Activated CD8-positive, alpha-beta memory T cell treated with anti-CD3 and anti-CD28 coated beads, Interleukin-2, amount 10 ng/mL, durations not matched to agents 7 days and 5 days (primary cell): ENCODE measurements at regions of chr17 and their contacts with region 1.

Region 1: DNA sequence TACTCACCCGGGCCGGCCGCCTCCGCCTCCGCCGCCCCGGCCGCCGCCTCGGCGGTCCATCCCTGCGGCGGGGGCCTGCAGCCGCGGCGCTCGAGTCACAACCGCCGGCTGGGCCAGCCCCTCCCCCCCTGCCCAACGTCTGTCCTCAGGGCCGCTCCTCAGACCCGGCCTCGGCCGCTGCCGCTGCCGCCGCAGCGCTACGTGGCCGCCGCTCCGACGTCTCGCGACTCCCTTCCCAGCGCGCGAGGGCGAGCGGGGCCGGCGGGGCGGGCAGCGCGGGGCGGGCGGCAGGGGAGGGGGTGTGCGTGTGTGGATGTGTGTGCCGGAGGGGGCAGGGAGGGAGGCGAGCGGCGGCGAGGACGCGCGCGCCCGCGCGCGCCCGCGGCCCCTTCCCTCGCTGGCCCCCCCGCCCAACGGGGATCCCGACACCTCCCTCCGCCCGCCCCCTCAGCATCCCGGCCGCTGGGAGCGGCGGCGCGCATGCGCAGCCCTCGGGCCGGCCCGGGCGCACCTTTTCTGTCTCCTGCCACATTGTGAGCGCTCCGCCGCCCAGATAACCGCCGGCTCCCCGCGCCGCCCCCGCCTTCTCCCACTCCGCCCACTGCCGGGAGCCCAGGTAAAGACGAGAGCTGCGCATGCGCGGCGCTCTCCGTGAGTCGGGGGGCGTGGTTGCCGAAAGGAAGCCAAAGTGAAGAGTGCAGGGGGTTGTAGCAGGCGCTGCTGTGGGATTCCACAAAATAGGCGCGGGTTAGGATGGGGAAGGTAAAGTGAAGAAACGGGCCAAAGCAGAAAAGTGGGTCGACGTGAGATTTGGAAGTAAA is at the start of gene ZNF652:
- DNase-seq: peak; percentile 97
- ATAC-seq: peak; percentile 76
- H3K4me3 Mint-ChIP-seq: peak within 1 kb of the TSS; percentile 98
- H3K27ac Mint-ChIP-seq: peak within 1 kb of the TSS; percentile 97
- H3K4me1 Mint-ChIP-seq: peaks cover 62% of the 10 kb centered on the region
- H3K27me3 Mint-ChIP-seq: no peaks in the 10 kb centered on the region
- total RNA-seq, gene ZNF652: 32.2 to 34.4 TPM

Region 2: DNA sequence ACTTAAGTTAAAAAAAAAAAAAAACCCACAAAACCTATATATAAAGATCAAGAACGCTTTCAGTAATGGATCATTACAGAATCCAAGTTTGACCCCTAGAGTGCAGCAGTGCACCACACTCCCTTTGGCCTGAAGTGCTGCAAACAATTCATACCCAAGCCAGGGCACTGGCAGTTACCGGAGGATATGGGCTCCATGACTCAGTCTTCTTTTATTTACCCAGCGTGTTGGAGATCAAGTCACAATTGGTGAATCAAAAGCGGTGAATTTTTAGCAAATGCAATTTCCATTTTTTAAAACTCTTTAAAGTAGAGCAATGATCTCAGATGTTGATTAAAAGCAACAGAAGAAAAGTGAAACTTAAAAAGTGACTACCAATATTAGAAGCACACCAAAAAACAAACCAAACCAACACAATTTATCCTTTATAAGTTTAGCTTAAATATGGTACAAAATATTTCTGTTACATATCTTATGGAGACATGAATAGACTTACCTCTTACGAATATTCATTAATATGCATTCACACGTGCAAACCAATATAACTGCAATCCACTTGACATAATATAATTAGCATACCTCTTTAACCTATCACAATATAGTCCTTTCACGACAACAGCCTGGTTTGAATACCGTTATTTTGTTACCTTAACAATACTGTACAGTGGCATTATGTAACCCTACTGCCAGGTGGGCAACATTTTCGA is 46.4 kb before region 1 on chr17:
- CTCF ChIA-PET with region 1: interaction called, 150 read pairs
- DNase-seq: peak; percentile 90
- ATAC-seq: peak; percentile 100
- H3K4me3 Mint-ChIP-seq: peak overlapping the region; percentile 65
- H3K27ac Mint-ChIP-seq: peak overlapping the region; percentile 68
- H3K4me1 Mint-ChIP-seq: peaks cover 38% of the 10 kb centered on the region
- H3K27me3 Mint-ChIP-seq: no peaks in the 10 kb centered on the region

Region 3: DNA sequence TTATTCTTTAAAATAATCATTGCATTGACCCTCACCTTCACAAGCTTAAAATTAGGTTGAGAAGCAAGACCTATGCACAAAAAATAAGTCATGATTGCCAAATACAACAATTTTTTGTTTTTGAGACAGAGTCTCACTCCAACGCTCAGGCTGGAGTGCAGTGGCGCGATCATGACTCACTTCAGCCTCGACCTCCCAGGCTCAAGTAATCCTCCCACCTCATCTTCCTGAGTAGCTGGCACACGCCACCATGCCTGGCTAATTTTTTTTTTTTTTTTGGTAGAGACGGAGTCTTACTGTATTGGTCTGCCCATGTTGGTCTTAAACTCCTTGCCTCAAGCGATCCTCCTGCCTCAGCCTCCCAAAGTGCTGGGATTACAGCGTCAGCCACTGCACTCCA is 24.2 kb before region 1 on chr17:
- CTCF ChIA-PET with region 1: interaction called, 42 read pairs
- DNase-seq: no peak
- ATAC-seq: no peak
- H3K4me3 Mint-ChIP-seq: no peak overlapping the region
- H3K27ac Mint-ChIP-seq: no peak overlapping the region
- H3K4me1 Mint-ChIP-seq: peaks cover 48% of the 10 kb centered on the region
- H3K27me3 Mint-ChIP-seq: peaks cover 5% of the 10 kb centered on the region

Region 4: DNA sequence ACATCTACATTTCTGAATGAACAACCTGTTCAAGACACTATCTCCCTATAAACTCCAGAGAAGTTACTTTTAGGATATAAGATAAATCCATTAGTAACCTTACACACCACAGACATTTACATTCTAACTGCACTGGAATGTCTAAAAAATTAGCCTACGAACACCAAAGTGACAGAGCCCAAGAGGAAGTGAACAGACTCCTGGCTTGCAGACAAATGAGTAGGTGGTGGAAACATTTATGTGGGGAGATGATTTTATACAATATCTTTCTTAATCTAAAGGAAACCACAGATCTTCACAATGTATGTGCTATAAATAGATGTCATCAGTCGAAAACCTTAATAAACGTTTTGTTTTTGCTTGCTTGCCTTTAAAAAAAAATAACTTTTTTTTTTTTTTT is 18.8 kb before region 1 on chr17:
- CTCF ChIA-PET with region 1: interaction called, 45 read pairs
- DNase-seq: no peak
- ATAC-seq: peak; percentile 67
- H3K4me3 Mint-ChIP-seq: peak overlapping the region; percentile 64
- H3K27ac Mint-ChIP-seq: peak overlapping the region; percentile 98
- H3K4me1 Mint-ChIP-seq: peaks cover 74% of the 10 kb centered on the region
- H3K27me3 Mint-ChIP-seq: peaks cover 5% of the 10 kb centered on the region

Region 5: DNA sequence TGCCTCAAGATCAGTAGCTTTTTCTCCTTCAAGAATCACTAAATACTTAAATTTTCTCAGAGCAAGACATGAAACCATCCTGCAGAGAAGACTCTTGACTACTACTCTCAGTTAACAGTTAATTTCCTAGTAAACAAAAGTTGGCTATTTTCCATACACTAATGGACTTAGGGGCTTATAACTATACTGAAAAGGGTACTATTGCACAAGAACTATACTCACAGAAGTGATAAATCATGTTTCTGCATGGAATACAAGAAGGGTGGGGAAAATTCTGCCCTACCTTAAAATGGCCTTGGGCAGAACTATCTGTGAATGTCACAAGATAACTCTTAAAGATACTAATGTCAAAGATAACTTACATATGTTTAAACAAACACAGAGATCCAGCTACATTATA is 12.6 kb before region 1 on chr17:
- CTCF ChIA-PET with region 1: interaction called, 45 read pairs
- DNase-seq: no peak
- ATAC-seq: no peak
- H3K4me3 Mint-ChIP-seq: no peak overlapping the region
- H3K27ac Mint-ChIP-seq: no peak overlapping the region
- H3K4me1 Mint-ChIP-seq: peaks cover 59% of the 10 kb centered on the region
- H3K27me3 Mint-ChIP-seq: no peaks in the 10 kb centered on the region

Region 6: GRCh38 chr17:49390548-49391324 is 28.6 kb after region 1 on chr17:
- CTCF ChIA-PET with region 1: interaction called, 67 read pairs
- DNase-seq: peak; percentile 50
- ATAC-seq: peak; percentile 40
- H3K4me3 Mint-ChIP-seq: peak overlapping the region; percentile 45
- H3K27ac Mint-ChIP-seq: peak overlapping the region; percentile 95
- H3K4me1 Mint-ChIP-seq: peaks cover 68% of the 10 kb centered on the region
- H3K27me3 Mint-ChIP-seq: no peaks in the 10 kb centered on the region